GM12878 (cell line): ENCODE measurements at regions of chr22 and their contacts with region 1.

Region 1: DNA sequence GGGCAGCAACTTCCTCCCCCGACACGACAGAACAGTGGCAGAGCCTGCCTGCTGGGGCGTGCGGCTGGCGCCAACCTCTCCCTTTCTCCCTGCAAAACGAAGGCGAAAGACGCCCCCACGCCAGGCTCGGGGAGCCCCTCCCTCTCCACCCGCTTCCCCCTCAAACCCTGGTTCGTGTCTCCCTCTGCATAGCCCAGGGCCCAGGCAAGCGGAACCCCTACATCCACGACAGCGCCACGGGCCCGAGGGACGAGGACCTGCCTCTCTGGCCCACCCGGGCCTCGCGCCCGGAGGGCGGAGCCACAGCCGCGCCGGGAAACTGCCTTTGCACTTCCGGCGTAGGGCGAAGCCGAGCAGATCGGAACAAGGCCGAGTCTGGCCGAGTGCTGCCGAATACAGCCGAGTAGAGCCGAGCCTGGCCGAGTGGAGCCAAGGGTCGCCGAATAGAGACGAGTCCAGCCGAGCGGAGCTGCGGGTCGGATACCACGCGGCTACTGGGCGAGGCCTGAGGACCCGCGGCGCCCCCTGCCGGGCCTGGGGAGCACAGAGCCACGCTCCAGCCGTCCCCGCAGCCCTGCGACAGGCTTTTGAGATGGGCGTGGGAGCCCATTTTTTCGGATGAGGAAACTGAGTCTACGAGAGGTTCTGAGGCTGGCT is 11.2 kb upstream of the C1QTNF6 start:
- DNase-seq: peak; percentile 98
- ATAC-seq: peak; percentile 94
- H3K4me3 ChIP-seq: peak overlapping the region; percentile 72
- H3K27ac ChIP-seq: peak overlapping the region; percentile 94
- H3K4me1 ChIP-seq: peaks cover 34% of the 10 kb centered on the region
- H3K27me3 ChIP-seq: no peaks in the 10 kb centered on the region
- CTCF ChIP-seq: peak; percentile 91 to 95 (median 93)
- EP300 ChIP-seq: no peak
- POLR2A ChIP-seq: peak; percentile 95
- RAD21 ChIP-seq: peak; percentile 69

Region 2: GRCh38 chr22:37043828-37044538 is 155.2 kb before region 1 on chr22:
- CTCF ChIA-PET with region 1: interaction called, 12 read pairs
- POLR2A ChIA-PET with region 1: no interaction called
- RAD21 ChIA-PET with region 1: interaction called, 10 read pairs
- SMC1A ChIA-PET with region 1: interaction called, 19 read pairs
- in situ Hi-C with region 1: no loop called
- intact Hi-C with region 1: no loop called
- DNase-seq: no peak
- ATAC-seq: peak; percentile 99
- H3K4me3 ChIP-seq: no peak overlapping the region
- H3K27ac ChIP-seq: no peak overlapping the region
- H3K4me1 ChIP-seq: peaks cover 10% of the 10 kb centered on the region
- H3K27me3 ChIP-seq: peaks cover 0 to 2% of the 10 kb centered on the region in 2 experiments; a peak in 1 of 4 replicates
- CTCF ChIP-seq: peak; percentile 81 to 92 (median 85)
- EP300 ChIP-seq: no peak
- POLR2A ChIP-seq: no peak
- RAD21 ChIP-seq: peak; percentile 58

Region 3: GRCh38 chr22:37121887-37122591 is 77.2 kb before region 1 on chr22:
- CTCF ChIA-PET with region 1: interaction called, 24 read pairs
- POLR2A ChIA-PET with region 1: interaction called, 4 read pairs
- RAD21 ChIA-PET with region 1: interaction called, 22 read pairs
- SMC1A ChIA-PET with region 1: interaction called, 13 read pairs
- in situ Hi-C with region 1: no loop called
- intact Hi-C with region 1: no loop called
- DNase-seq: peak; percentile 73
- ATAC-seq: peak; percentile 95
- H3K4me3 ChIP-seq: no peak overlapping the region
- H3K27ac ChIP-seq: peak overlapping the region; percentile 38
- H3K4me1 ChIP-seq: peaks cover 21% of the 10 kb centered on the region
- H3K27me3 ChIP-seq: no peaks in the 10 kb centered on the region
- CTCF ChIP-seq: peak in 2 of 3 experiments; percentile 9 to 16; a peak in 1 of 6 replicates
- EP300 ChIP-seq: no peak; a peak in 1 of 4 replicates
- POLR2A ChIP-seq: peak; percentile 74
- RAD21 ChIP-seq: 0 out of 2 replicates have a peak, but pooled peaks have one; percentile 24

Region 4: DNA sequence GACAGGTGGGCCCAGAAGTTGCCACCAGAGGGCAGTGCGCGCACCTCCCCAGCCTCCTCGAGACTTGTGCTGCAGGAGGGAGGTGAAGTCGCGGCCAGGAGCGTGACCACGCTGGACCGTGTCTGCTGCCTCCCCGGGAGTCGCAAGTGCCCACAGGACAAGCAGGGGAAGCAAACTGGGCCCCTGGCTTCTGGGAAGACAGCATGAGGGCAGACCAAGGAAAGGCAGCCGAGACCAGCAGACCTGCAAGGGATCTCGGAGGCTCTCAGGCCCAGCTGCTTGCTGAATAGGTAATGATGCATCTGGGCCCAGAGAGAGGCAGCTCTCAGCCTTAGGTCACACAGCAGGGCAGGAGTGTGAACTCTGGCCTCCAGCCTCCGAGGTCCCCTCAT is 32.6 kb before region 1 on chr22:
- CTCF ChIA-PET with region 1: interaction called, 53 read pairs
- POLR2A ChIA-PET with region 1: interaction called, 16 read pairs
- RAD21 ChIA-PET with region 1: interaction called, 99 read pairs
- SMC1A ChIA-PET with region 1: interaction called, 64 read pairs
- in situ Hi-C with region 1: no loop called
- intact Hi-C with region 1: loop called (anchors 1 kb)
- DNase-seq: no peak
- ATAC-seq: peak; percentile 21
- H3K4me3 ChIP-seq: no peak overlapping the region; the same call in 1 of the 2 replicates
- H3K27ac ChIP-seq: no peak overlapping the region; the same call in 1 of the 2 replicates
- H3K4me1 ChIP-seq: peaks cover 62% of the 10 kb centered on the region
- H3K27me3 ChIP-seq: no peaks in the 10 kb centered on the region
- CTCF ChIP-seq: peak in 2 of 3 experiments; percentile 87 to 92; a peak in 5 of 6 replicates
- EP300 ChIP-seq: no peak
- POLR2A ChIP-seq: no peak
- RAD21 ChIP-seq: peak; percentile 77

Region 5: GRCh38 chr22:37210041-37210803 is 11.0 kb after region 1 on chr22:
- CTCF ChIA-PET with region 1: interaction called, 111 read pairs
- POLR2A ChIA-PET with region 1: interaction called, 5 read pairs
- RAD21 ChIA-PET with region 1: interaction called, 38 read pairs
- SMC1A ChIA-PET with region 1: interaction called, 84 read pairs
- in situ Hi-C with region 1: no loop called
- intact Hi-C with region 1: no loop called
- DNase-seq: no peak
- ATAC-seq: no peak
- H3K4me3 ChIP-seq: no peak overlapping the region
- H3K27ac ChIP-seq: no peak overlapping the region
- H3K4me1 ChIP-seq: peaks cover 2% of the 10 kb centered on the region
- H3K27me3 ChIP-seq: no peaks in the 10 kb centered on the region
- CTCF ChIP-seq: no peak
- EP300 ChIP-seq: no peak
- POLR2A ChIP-seq: no peak
- RAD21 ChIP-seq: no peak

Region 6: GRCh38 chr22:37229805-37230672 is 30.8 kb after region 1 on chr22:
- CTCF ChIA-PET with region 1: interaction called, 21 read pairs
- POLR2A ChIA-PET with region 1: interaction called, 20 read pairs
- RAD21 ChIA-PET with region 1: interaction called, 13 read pairs
- SMC1A ChIA-PET with region 1: interaction called, 12 read pairs
- in situ Hi-C with region 1: no loop called
- intact Hi-C with region 1: no loop called
- DNase-seq: peak; percentile 60
- ATAC-seq: peak; percentile 88
- H3K4me3 ChIP-seq: peak overlapping the region; percentile 60; the same call in 1 of the 2 replicates
- H3K27ac ChIP-seq: peak overlapping the region; percentile 100
- H3K4me1 ChIP-seq: peaks cover 70% of the 10 kb centered on the region
- H3K27me3 ChIP-seq: no peaks in the 10 kb centered on the region
- CTCF ChIP-seq: no peak
- EP300 ChIP-seq: no peak
- POLR2A ChIP-seq: peak; percentile 69
- RAD21 ChIP-seq: no peak

Region 7: DNA sequence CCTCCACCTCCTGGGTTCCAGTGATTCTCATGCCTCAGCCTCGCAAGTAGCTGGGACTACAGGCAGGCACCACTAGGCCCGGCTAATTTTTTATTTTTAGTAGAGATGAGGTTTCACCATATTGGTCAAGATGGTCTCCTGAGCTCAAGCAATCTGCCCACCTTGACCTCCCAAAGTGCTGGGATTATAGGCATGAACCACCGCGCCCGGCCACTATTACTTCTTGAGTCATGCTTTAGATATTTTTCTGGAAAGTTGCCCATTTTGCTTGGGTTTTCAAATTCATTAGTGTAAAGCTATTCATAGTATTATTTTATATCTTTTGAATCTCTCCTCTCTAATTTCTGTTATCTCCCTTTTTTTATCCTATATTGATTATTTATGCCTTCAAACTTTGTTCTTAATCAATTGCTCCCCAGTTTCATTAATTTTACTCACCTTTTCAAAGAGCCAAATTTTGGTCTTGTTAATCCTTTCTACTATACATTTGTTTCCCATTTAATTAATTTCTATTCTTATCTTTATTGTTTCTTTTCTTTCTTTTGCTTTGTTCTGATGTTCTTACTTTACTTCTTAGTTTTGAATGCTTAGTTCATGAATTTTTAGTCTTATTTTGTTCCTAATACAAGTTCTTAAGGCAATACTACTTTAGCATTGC is 55.1 kb after region 1 on chr22:
- CTCF ChIA-PET with region 1: interaction called, 102 read pairs
- POLR2A ChIA-PET with region 1: interaction called, 7 read pairs
- RAD21 ChIA-PET with region 1: interaction called, 63 read pairs
- SMC1A ChIA-PET with region 1: interaction called, 57 read pairs
- in situ Hi-C with region 1: no loop called
- intact Hi-C with region 1: loop called (anchors 2 kb)
- DNase-seq: no peak
- ATAC-seq: no peak
- H3K4me3 ChIP-seq: no peak overlapping the region
- H3K27ac ChIP-seq: no peak overlapping the region
- H3K4me1 ChIP-seq: peaks cover 8% of the 10 kb centered on the region; the same call in 1 of the 2 replicates
- H3K27me3 ChIP-seq: no peaks in the 10 kb centered on the region
- CTCF ChIP-seq: no peak
- EP300 ChIP-seq: no peak
- POLR2A ChIP-seq: no peak
- RAD21 ChIP-seq: no peak